Calu3 (cell line): ENCODE measurements at regions of chr16 and their contacts with region 1.

Region 1: GRCh38 chr16:27639561-27640276 is 89.8 kb downstream of the KATNIP start:
- DNase-seq: peak; percentile 48
- H3K4me3 Mint-ChIP-seq: no peak overlapping the region
- H3K27ac Mint-ChIP-seq: no peak overlapping the region
- H3K4me1 Mint-ChIP-seq: no peaks in the 10 kb centered on the region
- H3K27me3 Mint-ChIP-seq: no peaks in the 10 kb centered on the region
- CTCF ChIP-seq: peak; percentile 63

Region 2: GRCh38 chr16:27600381-27600780 is 39.3 kb before region 1 on chr16:
- CTCF ChIA-PET with region 1: no interaction called
- intact Hi-C with region 1: no loop called
- DNase-seq: no peak
- H3K4me3 Mint-ChIP-seq: no peak overlapping the region
- H3K27ac Mint-ChIP-seq: no peak overlapping the region
- H3K4me1 Mint-ChIP-seq: no peaks in the 10 kb centered on the region
- H3K27me3 Mint-ChIP-seq: no peaks in the 10 kb centered on the region
- CTCF ChIP-seq: no peak

Region 3: GRCh38 chr16:27625050-27625697 is 14.5 kb before region 1 on chr16:
- CTCF ChIA-PET with region 1: interaction called, 10 read pairs
- intact Hi-C with region 1: no loop called
- DNase-seq: no peak
- H3K4me3 Mint-ChIP-seq: no peak overlapping the region
- H3K27ac Mint-ChIP-seq: no peak overlapping the region
- H3K4me1 Mint-ChIP-seq: peaks cover 9% of the 10 kb centered on the region
- H3K27me3 Mint-ChIP-seq: no peaks in the 10 kb centered on the region
- CTCF ChIP-seq: no peak

Region 4: DNA sequence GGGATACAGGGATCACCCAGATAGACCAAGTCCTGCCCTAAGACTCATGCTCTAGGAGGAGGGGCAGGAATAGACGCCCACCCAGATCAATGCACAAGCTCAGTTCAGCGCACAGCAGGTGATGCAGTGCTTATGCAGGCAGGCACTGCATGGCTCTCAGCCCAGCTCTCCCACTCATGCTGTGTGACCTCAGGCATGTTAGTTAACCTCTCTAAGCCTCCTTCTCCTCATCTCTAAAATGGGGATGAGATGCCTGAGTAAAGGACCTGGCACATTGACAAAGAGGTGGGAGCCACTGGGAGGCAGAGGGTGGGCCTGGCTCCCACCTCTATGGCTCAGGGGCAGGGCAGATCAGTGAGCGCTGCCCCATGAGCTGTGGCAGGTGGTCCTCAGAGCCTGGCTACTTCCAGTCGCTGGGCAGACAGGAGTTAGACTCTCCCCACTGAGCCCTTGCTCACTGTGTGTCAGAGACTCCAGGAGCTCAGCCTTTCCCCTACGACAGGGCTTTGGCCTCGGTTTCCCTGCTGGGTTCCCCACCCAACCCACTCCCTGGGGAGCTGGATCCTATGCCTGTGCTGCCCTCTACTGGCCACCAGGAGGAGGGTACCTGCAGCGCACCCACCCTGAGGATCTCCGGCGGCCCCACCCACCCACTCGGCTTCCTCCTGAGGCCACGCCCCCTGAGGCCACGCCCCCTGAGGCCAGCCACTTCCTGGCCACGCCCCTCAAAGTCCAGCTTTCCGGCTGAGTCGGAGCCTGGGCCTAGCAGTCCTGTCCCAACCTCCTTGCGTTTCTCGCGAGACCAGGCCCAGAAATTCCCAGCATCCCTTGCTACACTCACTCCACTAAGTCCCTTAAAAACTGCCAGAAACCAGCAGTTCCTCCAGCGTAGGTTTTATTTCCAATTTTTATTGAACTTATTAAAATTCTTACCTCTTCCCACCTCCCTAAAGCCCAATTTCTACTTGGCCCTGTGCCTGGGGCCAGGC is 227.7 kb after region 1 on chr16:
- CTCF ChIA-PET with region 1: interaction called, 8 read pairs
- intact Hi-C with region 1: loop called (anchors 5 kb)
- DNase-seq: peak; percentile 81
- H3K4me3 Mint-ChIP-seq: no peak overlapping the region
- H3K27ac Mint-ChIP-seq: no peak overlapping the region
- H3K4me1 Mint-ChIP-seq: no peaks in the 10 kb centered on the region
- H3K27me3 Mint-ChIP-seq: no peaks in the 10 kb centered on the region
- CTCF ChIP-seq: peak; percentile 48

Region 5: GRCh38 chr16:28069971-28070794 is 430.5 kb after region 1 on chr16:
- CTCF ChIA-PET with region 1: interaction called, 7 read pairs
- intact Hi-C with region 1: loop called (anchors 2 kb)
- DNase-seq: no peak
- H3K4me3 Mint-ChIP-seq: no peak overlapping the region
- H3K27ac Mint-ChIP-seq: no peak overlapping the region
- H3K4me1 Mint-ChIP-seq: no peaks in the 10 kb centered on the region
- H3K27me3 Mint-ChIP-seq: peaks cover 92% of the 10 kb centered on the region
- CTCF ChIP-seq: no peak